ENCODE measurements at regions of chr20 and their contacts with region 1.

Region 1: DNA sequence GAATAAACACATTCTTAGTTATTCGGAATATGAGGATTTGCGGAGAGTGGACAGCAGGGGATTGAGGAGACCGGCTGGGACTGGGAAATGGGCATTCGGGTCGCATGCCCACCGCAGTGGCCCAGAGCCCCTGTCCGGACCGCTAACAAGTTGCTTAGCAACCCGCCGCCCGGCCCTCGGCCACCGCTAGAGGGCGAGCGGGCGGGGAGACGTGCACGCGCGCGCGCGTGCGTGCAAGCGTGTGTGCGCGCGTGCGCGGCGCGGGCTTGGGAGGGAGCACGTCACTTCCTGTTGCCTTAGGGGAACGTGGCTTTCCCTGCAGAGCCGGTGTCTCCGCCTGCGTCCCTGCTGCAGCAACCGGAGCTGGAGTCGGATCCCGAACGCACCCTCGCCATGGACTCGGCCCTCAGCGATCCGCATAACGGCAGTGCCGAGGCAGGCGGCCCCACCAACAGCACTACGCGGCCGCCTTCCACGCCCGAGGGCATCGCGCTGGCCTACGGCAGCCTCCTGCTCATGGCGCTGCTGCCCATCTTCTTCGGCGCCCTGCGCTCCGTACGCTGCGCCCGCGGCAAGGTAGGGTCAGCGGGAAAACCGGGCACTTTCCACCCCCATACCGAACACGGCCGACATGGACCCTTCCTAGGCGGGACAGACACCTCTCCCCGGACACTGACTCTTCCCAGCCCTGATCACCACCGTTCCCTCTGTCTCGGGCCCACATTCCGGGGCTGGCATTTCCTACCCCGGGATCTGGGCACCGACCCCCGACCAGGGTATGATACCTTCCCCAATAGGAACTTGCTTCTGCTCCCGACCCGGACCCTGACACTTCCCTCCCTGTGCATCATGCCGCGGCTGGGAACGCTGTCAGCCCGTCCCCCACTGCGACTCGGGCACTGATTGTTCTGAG is at the start of gene HM13:
- DNase-seq: peak; percentile 97
- H3K4me3 Mint-ChIP-seq: no peak within 1 kb of the TSS
- H3K27ac Mint-ChIP-seq: peak within 1 kb of the TSS; percentile 45
- H3K4me1 Mint-ChIP-seq: peaks cover 10% of the 10 kb centered on the region
- H3K27me3 Mint-ChIP-seq: no peaks in the 10 kb centered on the region
- total RNA-seq, gene HM13: 181 and 193 TPM in 2 replicates

Region 2: GRCh38 chr20:31560094-31560899 is 45.9 kb after region 1 on chr20:
- intact Hi-C with region 1: loop called (anchors 10 kb)
- DNase-seq: peak; percentile 91
- H3K4me3 Mint-ChIP-seq: no peak overlapping the region
- H3K27ac Mint-ChIP-seq: peak overlapping the region; percentile 85
- H3K4me1 Mint-ChIP-seq: peaks cover 12% of the 10 kb centered on the region
- H3K27me3 Mint-ChIP-seq: no peaks in the 10 kb centered on the region

Region 3: GRCh38 chr20:31661625-31662371 is 147.4 kb after region 1 on chr20:
- intact Hi-C with region 1: no loop called
- DNase-seq: peak; percentile 92
- H3K4me3 Mint-ChIP-seq: peak overlapping the region; percentile 78
- H3K27ac Mint-ChIP-seq: peak overlapping the region; percentile 89
- H3K4me1 Mint-ChIP-seq: peaks cover 47% of the 10 kb centered on the region
- H3K27me3 Mint-ChIP-seq: no peaks in the 10 kb centered on the region

Measured in activated CD4-positive, alpha-beta T cell treated with anti-CD3 and anti-CD28 coated beads, Interleukin-2, amount 10 ng/mL, durations not matched to agents 24 days and 14 days (primary cell).